ENCODE measurements at regions of chr17 and their contacts with region 1.

Region 1: DNA sequence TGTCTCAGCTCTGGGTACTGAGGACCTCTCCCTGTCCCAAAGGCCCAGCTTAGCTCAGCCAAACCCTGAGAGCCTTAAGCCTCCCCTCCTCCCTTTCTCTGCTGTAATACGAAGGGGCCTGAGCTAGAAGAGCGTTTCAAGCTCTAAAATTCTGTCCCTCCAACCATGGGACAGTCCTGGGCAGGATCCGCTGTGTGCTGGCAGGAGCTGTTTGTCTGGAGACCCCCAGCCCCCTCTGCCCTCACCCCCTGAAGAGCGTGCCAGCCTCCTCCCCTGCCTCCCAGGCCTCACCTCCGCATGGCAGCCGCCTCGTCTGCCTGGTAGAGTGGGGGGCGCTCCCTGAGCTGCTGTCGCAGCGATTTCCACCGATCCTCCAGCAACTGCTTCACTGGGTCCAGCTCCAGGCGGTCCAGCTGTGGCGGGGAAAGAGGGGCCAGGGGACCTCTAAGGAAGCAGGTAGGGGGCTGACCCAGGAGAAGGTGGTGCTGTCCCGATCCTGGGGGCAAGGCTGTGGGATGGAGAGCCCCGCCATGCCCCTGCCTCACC is 14.7 kb downstream of the UBALD2 start:
- DNase-seq: peak in 1 of 2 donors; percentile 91
- H3K4me3 ChIP-seq: no peak overlapping the region
- H3K27ac ChIP-seq: no peak overlapping the region
- H3K4me1 ChIP-seq: peaks cover 11% of the 10 kb centered on the region
- H3K27me3 ChIP-seq: no peaks in the 10 kb centered on the region
- CTCF ChIP-seq: peak in 1 of 3 experiments; percentile 34
- POLR2A ChIP-seq: no peak

Region 2: GRCh38 chr17:76005263-76006149 is 274.3 kb before region 1 on chr17:
- intact Hi-C with region 1: loop called (anchors 10 kb)
- DNase-seq: no peak
- H3K4me3 ChIP-seq: no peak overlapping the region
- H3K27ac ChIP-seq: no peak overlapping the region
- H3K4me1 ChIP-seq: no peaks in the 10 kb centered on the region
- H3K27me3 ChIP-seq: no peaks in the 10 kb centered on the region
- CTCF ChIP-seq: peak; percentile 47 to 78 (median 50)
- POLR2A ChIP-seq: no peak

Region 3: DNA sequence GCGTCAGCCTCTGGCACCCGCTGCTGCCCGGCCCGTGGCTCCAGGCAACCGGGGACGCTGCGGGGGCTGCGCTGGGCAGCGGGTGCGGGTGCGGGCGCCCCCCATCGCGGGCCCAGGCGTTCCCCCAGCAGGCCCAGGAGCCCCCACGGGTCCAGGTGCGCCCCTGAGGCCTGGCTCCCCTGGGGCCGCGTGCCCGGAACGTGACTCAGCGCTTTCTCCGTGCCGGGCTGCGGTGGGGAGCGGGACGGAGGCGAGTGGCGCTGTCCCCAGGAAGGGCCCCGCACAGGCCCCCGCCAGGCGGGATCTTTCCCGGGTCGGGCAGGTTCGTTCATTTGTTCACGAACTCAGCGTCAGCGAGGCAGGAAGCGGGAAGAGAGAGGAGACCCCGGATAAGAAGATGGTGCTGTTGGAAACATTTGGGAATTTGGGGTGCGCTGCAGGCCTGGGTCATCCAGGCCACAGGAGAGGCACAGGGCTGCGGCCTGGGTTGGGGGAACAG is 157.8 kb before region 1 on chr17:
- intact Hi-C with region 1: loop called (anchors 2 kb)
- DNase-seq: no peak
- H3K4me3 ChIP-seq: peak overlapping the region; percentile 40 to 42
- H3K27ac ChIP-seq: peak overlapping the region; percentile 57
- H3K4me1 ChIP-seq: peaks cover 10% of the 10 kb centered on the region
- H3K27me3 ChIP-seq: no peaks in the 10 kb centered on the region
- CTCF ChIP-seq: no peak
- POLR2A ChIP-seq: no peak